Endothelial cell of umbilical vein (primary cell): ENCODE measurements at regions of chr13 and their contacts with region 1.

Region 1: DNA sequence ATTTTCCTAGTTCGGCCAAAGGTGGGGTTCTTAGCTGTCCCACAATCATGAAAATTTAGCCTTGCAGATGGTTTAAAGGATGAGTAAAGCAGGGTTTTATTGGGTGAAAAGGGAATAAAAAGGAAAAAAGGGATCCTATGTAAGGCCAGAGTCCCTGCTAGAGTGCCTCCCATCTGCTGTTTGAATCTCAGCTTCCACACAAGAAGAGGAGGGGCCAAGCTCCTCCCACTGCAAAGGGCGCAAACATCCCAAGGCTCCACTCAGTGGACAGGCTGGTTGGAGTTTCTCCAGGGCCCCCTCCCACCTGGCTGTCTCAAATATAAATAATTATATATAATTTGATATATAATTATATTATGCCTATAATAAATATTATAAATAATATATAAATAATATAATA is 1272.1 kb upstream of the PCDH20 start:
- DNase-seq: no peak
- H3K4me3 ChIP-seq: no peak overlapping the region
- H3K27ac ChIP-seq: no peak overlapping the region
- H3K4me1 ChIP-seq: no peaks in the 10 kb centered on the region
- H3K27me3 ChIP-seq: no peaks in the 10 kb centered on the region
- CTCF ChIP-seq: no peak
- POLR2A ChIP-seq: no peak

Region 2: GRCh38 chr13:62524061-62524460 is 163.7 kb before region 1 on chr13:
- CTCF ChIA-PET with region 1: no interaction called
- POLR2A ChIA-PET with region 1: no interaction called
- dilution Hi-C with region 1: no loop called
- intact Hi-C with region 1: loop called (anchors 5 kb)
- DNase-seq: no peak
- H3K4me3 ChIP-seq: no peak overlapping the region
- H3K27ac ChIP-seq: no peak overlapping the region
- H3K4me1 ChIP-seq: no peaks in the 10 kb centered on the region
- H3K27me3 ChIP-seq: no peaks in the 10 kb centered on the region
- CTCF ChIP-seq: no peak
- POLR2A ChIP-seq: no peak